ENCODE measurements at regions of chr4 and their contacts with region 1.

Region 1: GRCh38 chr4:10116580-10117358 is at the start of gene WDR1:
- DNase-seq: peak; percentile 96 to 99
- H3K4me3 ChIP-seq: peak within 1 kb of the TSS; percentile 86 to 93
- H3K27ac ChIP-seq: peak within 1 kb of the TSS; percentile 95 to 96
- H3K4me1 ChIP-seq: peaks cover 0 to 55% (median 49%) of the 10 kb centered on the region in 4 donors
- H3K27me3 ChIP-seq: no peaks in the 10 kb centered on the region
- CTCF ChIP-seq: no peak

Region 2: GRCh38 chr4:10100734-10101216 is 16.0 kb before region 1 on chr4:
- intact Hi-C with region 1: loop called (anchors 2 kb)
- DNase-seq: peak; percentile 77 to 88
- H3K4me3 ChIP-seq: no peak overlapping the region
- H3K27ac ChIP-seq: peak overlapping the region; percentile 95 to 96
- H3K4me1 ChIP-seq: peaks cover 0 to 100% (median 92%) of the 10 kb centered on the region in 4 donors
- H3K27me3 ChIP-seq: no peaks in the 10 kb centered on the region
- CTCF ChIP-seq: no peak

Measured in tibial artery (tissue), 4 donors.